CD8-positive, alpha-beta memory T cell (primary cell): ENCODE measurements at regions of chr15 and their contacts with region 1.

Region 1: GRCh38 chr15:86347245-86347644 is 267.6 kb downstream of the AGBL1 start:
- DNase-seq: no peak
- H3K4me3 ChIP-seq: no peak overlapping the region
- H3K4me3 Mint-ChIP-seq: no peak overlapping the region
- H3K27ac ChIP-seq: no peak overlapping the region
- H3K27ac Mint-ChIP-seq: no peak overlapping the region
- H3K4me1 ChIP-seq: no peaks in the 10 kb centered on the region
- H3K4me1 Mint-ChIP-seq: no peaks in the 10 kb centered on the region
- H3K27me3 ChIP-seq: no peaks in the 10 kb centered on the region
- H3K27me3 Mint-ChIP-seq: peaks cover 5 to 7% of the 10 kb centered on the region in 2 donors

Region 2: GRCh38 chr15:87623832-87624231 is 1276.6 kb after region 1 on chr15:
- CTCF ChIA-PET with region 1: no interaction called
- POLR2A ChIA-PET with region 1: interaction called, 14 read pairs
- DNase-seq: no peak
- H3K4me3 ChIP-seq: no peak overlapping the region
- H3K4me3 Mint-ChIP-seq: no peak overlapping the region
- H3K27ac ChIP-seq: no peak overlapping the region
- H3K27ac Mint-ChIP-seq: no peak overlapping the region
- H3K4me1 ChIP-seq: no peaks in the 10 kb centered on the region
- H3K4me1 Mint-ChIP-seq: peaks cover 0 to 2% (median 0%) of the 10 kb centered on the region in 3 donors
- H3K27me3 ChIP-seq: no peaks in the 10 kb centered on the region
- H3K27me3 Mint-ChIP-seq: peaks cover 0 to 3% of the 10 kb centered on the region in 2 donors